Esophagus muscularis mucosa (tissue), 4 donors: ENCODE measurements at regions of chr6 and their contacts with region 1.

Region 1: GRCh38 chr6:117346142-117346930 is 79.4 kb downstream of the ROS1 start:
- DNase-seq: no peak
- H3K4me3 ChIP-seq: no peak overlapping the region
- H3K27ac ChIP-seq: no peak overlapping the region
- H3K4me1 ChIP-seq: no peaks in the 10 kb centered on the region
- H3K27me3 ChIP-seq: peaks cover 0 to 11% (median 0%) of the 10 kb centered on the region in 4 donors
- CTCF ChIP-seq: peak; percentile 20 to 54 (median 51)
- EP300 ChIP-seq: no peak
- POLR2A ChIP-seq: no peak

Region 2: GRCh38 chr6:117449549-117450439 is 103.5 kb after region 1 on chr6:
- intact Hi-C with region 1: loop called (anchors 10 kb)
- DNase-seq: no peak
- H3K4me3 ChIP-seq: no peak overlapping the region
- H3K27ac ChIP-seq: no peak overlapping the region
- H3K4me1 ChIP-seq: peaks cover 0 to 5% (median 1%) of the 10 kb centered on the region in 4 donors
- H3K27me3 ChIP-seq: peaks cover 0 to 37% (median 0%) of the 10 kb centered on the region in 4 donors
- CTCF ChIP-seq: peak; percentile 57 to 76 (median 74)
- EP300 ChIP-seq: no peak
- POLR2A ChIP-seq: no peak

Region 3: DNA sequence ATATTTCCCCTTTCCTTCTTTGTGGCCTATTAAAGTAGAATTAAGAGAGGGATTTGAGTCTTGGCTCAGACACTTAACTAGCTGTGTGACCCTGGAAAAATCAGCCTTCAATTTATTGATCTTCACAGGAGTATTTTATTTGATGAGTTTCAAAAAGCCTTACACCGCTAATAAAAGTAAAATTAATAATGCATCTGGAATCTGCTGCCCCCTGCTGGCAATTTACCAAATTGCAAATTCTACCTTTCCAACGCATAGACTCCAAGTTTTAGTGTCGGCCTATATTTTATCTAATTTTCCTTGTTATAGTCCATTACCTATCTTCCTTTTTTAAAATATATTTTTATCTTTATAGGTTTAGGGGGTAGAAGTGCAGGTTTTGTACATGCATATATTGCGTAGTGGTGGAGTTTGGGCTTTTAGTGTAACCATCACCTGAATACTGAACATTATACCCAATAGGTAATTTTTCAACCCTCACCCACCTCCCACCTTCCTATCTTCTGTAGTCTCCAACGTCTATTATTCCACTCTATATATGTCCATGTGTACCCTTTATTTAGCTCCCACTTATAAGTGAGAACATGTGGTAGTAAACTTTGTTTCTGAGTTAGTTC is 209.7 kb after region 1 on chr6:
- intact Hi-C with region 1: loop called (anchors 5 kb)
- DNase-seq: no peak
- H3K4me3 ChIP-seq: no peak overlapping the region
- H3K27ac ChIP-seq: no peak overlapping the region
- H3K4me1 ChIP-seq: peaks cover 0 to 5% (median 2%) of the 10 kb centered on the region in 4 donors
- H3K27me3 ChIP-seq: no peaks in the 10 kb centered on the region
- CTCF ChIP-seq: peak; percentile 78 to 93 (median 91)
- EP300 ChIP-seq: no peak
- POLR2A ChIP-seq: no peak

Region 4: GRCh38 chr6:117602151-117602898 is 256.0 kb after region 1 on chr6 and contains the start of gene GOPC:
- intact Hi-C with region 1: loop called (anchors 5 kb)
- DNase-seq: peak; percentile 98
- H3K4me3 ChIP-seq: peak within 1 kb of the TSS; percentile 76 to 97 (median 82)
- H3K27ac ChIP-seq: peak within 1 kb of the TSS; percentile 86 to 93 (median 90)
- H3K4me1 ChIP-seq: peaks cover 21 to 39% (median 29%) of the 10 kb centered on the region in 4 donors
- H3K27me3 ChIP-seq: no peaks in the 10 kb centered on the region
- CTCF ChIP-seq: no peak
- EP300 ChIP-seq: no peak
- POLR2A ChIP-seq: peak; percentile 34
- total RNA-seq, gene GOPC: 18.8 to 25.7 (median 22.8) TPM